B cell (primary cell): ENCODE measurements at regions of chr11 and their contacts with region 1.

Region 1: DNA sequence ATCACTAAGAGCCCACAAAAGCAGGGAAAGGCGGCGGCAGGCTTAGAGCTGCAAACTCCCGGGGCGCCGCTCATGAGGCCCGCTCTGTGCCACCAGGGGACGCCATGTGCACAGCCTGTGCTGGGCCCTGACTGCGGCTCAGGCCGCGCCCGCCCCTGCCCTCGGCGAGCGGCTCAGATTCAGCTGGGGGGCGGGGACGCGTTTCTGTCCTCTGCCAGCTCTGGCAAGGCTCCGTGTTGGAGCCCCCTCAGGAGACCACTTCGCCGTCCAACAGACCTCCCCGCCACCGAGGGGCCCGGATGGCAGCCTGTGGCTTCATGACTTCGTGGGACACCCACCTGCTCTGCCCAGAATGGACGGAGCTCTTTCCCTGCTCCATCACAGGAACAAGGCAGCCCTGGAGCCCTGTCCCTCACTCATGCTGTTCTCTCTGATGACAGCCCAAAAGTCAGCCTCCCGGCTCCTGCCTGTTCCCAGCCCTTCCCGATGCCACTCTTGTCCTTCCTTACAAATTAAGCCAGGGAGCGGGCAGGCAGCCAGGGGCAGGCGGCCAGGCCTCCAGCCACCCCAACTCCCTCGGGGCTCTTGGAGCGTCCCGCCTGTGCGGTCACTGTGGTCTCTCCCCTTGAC is 69.1 kb downstream of the NAT10 start:
- DNase-seq: peak; percentile 84
- ATAC-seq: peak; percentile 100
- H3K4me3 ChIP-seq: peak overlapping the region in 2 of 5 experiments; percentile 12 to 33
- H3K4me3 Mint-ChIP-seq: peak overlapping the region; percentile 49
- H3K27ac ChIP-seq: no peak overlapping the region
- H3K27ac Mint-ChIP-seq: no peak overlapping the region
- H3K4me1 ChIP-seq: peaks cover 0 to 11% of the 10 kb centered on the region in 2 donors
- H3K4me1 Mint-ChIP-seq: peaks cover 5% of the 10 kb centered on the region
- H3K27me3 ChIP-seq: peaks cover 0 to 11% (median 0%) of the 10 kb centered on the region in 4 experiments
- H3K27me3 Mint-ChIP-seq: no peaks in the 10 kb centered on the region
- CTCF ChIP-seq: peak; percentile 89

Region 2: GRCh38 chr11:34134765-34135164 is 39.8 kb before region 1 on chr11:
- CTCF ChIA-PET with region 1: no interaction called
- POLR2A ChIA-PET with region 1: no interaction called
- intact Hi-C with region 1: no loop called
- DNase-seq: no peak
- ATAC-seq: no peak
- H3K4me3 ChIP-seq: no peak overlapping the region
- H3K4me3 Mint-ChIP-seq: no peak overlapping the region
- H3K27ac ChIP-seq: no peak overlapping the region
- H3K27ac Mint-ChIP-seq: no peak overlapping the region
- H3K4me1 ChIP-seq: no peaks in the 10 kb centered on the region
- H3K4me1 Mint-ChIP-seq: no peaks in the 10 kb centered on the region
- H3K27me3 ChIP-seq: no peaks in the 10 kb centered on the region
- H3K27me3 Mint-ChIP-seq: no peaks in the 10 kb centered on the region
- CTCF ChIP-seq: no peak

Region 3: DNA sequence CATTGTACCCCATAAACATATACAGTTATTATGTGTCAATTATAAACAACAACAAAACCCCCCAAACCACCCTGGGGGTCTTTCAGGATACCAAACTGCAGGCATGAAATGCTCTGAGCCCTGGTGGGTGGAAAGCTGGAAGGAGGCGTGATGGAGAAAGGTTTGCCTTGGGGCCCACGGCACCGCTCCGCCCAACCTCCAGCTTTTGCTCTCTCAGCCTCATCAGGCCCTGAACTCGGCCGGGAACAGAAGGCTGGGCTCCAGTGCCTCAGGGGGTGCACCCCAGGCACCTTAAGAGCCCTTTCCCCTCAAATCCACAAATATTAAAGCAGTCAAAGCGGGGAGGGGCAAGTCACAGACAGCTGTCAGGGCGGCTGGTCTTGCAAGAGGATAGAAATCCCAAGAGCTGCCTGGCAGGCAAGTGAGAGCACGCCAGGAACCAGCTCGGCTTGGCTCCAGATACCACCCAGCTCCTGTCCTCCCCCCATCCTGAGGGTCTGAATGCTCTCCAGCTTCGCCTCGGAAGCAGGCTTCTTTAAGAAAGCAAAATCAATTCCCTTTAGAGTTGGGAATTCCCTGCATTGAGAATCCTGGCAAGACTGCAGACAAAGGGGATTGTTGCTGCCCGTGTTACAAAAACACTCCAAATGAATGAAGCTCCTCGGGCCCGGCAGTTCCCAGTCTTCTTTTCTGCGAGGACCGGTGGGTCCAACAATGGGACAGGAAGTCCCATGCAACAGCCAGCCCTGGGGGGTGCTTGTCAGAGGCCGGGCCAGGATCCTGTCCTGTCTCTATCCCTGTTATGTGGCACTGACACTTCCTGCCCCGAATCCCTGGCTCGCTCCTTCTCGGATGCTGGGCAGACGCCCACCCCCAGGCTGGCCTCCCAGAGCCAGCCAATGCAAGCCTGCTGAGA is 11.7 kb after region 1 on chr11:
- CTCF ChIA-PET with region 1: interaction called, 16 read pairs
- POLR2A ChIA-PET with region 1: interaction called, 5 read pairs
- intact Hi-C with region 1: no loop called
- DNase-seq: no peak
- ATAC-seq: no peak
- H3K4me3 ChIP-seq: no peak overlapping the region
- H3K4me3 Mint-ChIP-seq: no peak overlapping the region
- H3K27ac ChIP-seq: no peak overlapping the region
- H3K27ac Mint-ChIP-seq: no peak overlapping the region
- H3K4me1 ChIP-seq: peaks cover 0 to 2% of the 10 kb centered on the region in 2 donors
- H3K4me1 Mint-ChIP-seq: peaks cover 2% of the 10 kb centered on the region
- H3K27me3 ChIP-seq: no peaks in the 10 kb centered on the region
- H3K27me3 Mint-ChIP-seq: no peaks in the 10 kb centered on the region
- CTCF ChIP-seq: no peak

Region 4: DNA sequence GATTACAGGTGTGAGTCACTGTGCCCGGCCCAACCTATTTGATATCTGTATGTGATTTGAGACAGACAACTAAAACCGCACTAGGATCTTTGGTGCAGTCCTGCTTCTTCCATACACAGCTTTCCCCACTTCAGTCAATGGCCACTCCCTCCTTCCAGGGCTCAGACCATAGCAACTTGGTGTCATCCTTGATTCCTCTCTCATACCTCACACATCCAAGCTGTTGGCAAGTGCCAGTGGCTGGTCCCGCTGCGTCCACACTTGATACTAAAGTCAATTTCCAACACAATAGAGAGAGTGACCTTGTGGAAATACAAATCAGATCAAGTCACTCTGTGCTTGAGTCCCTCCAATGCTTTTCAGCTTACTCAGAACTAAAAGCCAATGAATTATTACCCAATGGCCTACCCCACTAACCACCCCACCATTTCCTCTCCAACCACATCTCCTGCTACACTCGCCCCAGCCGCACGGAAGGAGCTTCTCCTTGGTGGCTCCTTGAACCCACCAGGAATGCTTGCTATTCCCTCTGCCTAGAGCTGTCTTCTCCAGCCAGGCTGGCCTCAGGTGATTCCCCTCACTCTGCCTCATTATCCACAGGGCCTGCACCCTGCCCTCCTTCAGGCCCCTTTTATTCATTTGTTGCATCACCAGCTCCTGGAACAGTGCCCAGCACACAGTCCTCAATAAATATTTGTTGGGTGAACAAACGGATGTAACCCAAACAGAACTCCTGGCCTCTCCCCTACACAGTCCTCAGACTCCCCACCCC is 170.4 kb after region 1 on chr11:
- CTCF ChIA-PET with region 1: interaction called, 34 read pairs
- POLR2A ChIA-PET with region 1: no interaction called
- intact Hi-C with region 1: no loop called
- DNase-seq: no peak
- ATAC-seq: no peak
- H3K4me3 ChIP-seq: no peak overlapping the region
- H3K4me3 Mint-ChIP-seq: no peak overlapping the region
- H3K27ac ChIP-seq: no peak overlapping the region
- H3K27ac Mint-ChIP-seq: no peak overlapping the region
- H3K4me1 ChIP-seq: no peaks in the 10 kb centered on the region
- H3K4me1 Mint-ChIP-seq: no peaks in the 10 kb centered on the region
- H3K27me3 ChIP-seq: no peaks in the 10 kb centered on the region
- H3K27me3 Mint-ChIP-seq: no peaks in the 10 kb centered on the region
- CTCF ChIP-seq: no peak

Region 5: DNA sequence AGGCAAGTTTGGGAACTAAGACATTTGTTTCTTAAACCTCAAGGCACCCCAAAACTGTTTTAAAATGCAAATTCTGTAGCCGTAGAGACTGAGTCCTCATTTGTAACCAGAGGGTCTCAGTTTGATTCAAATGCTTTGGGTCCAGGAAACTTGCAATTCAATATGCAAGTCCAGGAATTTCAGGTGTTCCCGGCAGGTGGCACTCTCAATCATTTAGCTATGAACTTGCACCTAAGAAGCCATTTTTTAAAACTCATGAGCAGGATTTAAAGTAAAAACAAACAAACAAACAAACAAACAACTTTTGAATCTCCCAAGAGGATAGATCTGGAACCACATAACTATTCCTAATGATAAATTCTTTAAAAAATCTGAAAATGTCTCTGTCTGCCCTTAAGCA is 192.0 kb after region 1 on chr11:
- CTCF ChIA-PET with region 1: interaction called, 56 read pairs
- POLR2A ChIA-PET with region 1: interaction called, 3 read pairs
- intact Hi-C with region 1: no loop called
- DNase-seq: no peak
- ATAC-seq: no peak
- H3K4me3 ChIP-seq: no peak overlapping the region
- H3K4me3 Mint-ChIP-seq: no peak overlapping the region
- H3K27ac ChIP-seq: no peak overlapping the region
- H3K27ac Mint-ChIP-seq: no peak overlapping the region
- H3K4me1 ChIP-seq: no peaks in the 10 kb centered on the region
- H3K4me1 Mint-ChIP-seq: no peaks in the 10 kb centered on the region
- H3K27me3 ChIP-seq: peaks cover 0 to 6% (median 4%) of the 10 kb centered on the region in 4 experiments
- H3K27me3 Mint-ChIP-seq: peaks cover 38% of the 10 kb centered on the region
- CTCF ChIP-seq: no peak

Region 6: GRCh38 chr11:34394771-34395300 is 220.3 kb after region 1 on chr11:
- CTCF ChIA-PET with region 1: no interaction called
- POLR2A ChIA-PET with region 1: no interaction called
- intact Hi-C with region 1: no loop called
- DNase-seq: no peak
- ATAC-seq: no peak
- H3K4me3 ChIP-seq: no peak overlapping the region
- H3K4me3 Mint-ChIP-seq: no peak overlapping the region
- H3K27ac ChIP-seq: no peak overlapping the region
- H3K27ac Mint-ChIP-seq: no peak overlapping the region
- H3K4me1 ChIP-seq: no peaks in the 10 kb centered on the region
- H3K4me1 Mint-ChIP-seq: no peaks in the 10 kb centered on the region
- H3K27me3 ChIP-seq: peaks cover 0 to 6% (median 4%) of the 10 kb centered on the region in 4 experiments
- H3K27me3 Mint-ChIP-seq: peaks cover 46% of the 10 kb centered on the region
- CTCF ChIP-seq: no peak

Region 7: GRCh38 chr11:34492806-34493414 is 318.4 kb after region 1 on chr11:
- CTCF ChIA-PET with region 1: interaction called, 18 read pairs
- POLR2A ChIA-PET with region 1: no interaction called
- intact Hi-C with region 1: no loop called
- DNase-seq: peak; percentile 64
- ATAC-seq: no peak
- H3K4me3 ChIP-seq: no peak overlapping the region
- H3K4me3 Mint-ChIP-seq: no peak overlapping the region
- H3K27ac ChIP-seq: no peak overlapping the region
- H3K27ac Mint-ChIP-seq: no peak overlapping the region
- H3K4me1 ChIP-seq: no peaks in the 10 kb centered on the region
- H3K4me1 Mint-ChIP-seq: no peaks in the 10 kb centered on the region
- H3K27me3 ChIP-seq: no peaks in the 10 kb centered on the region
- H3K27me3 Mint-ChIP-seq: peaks cover 2% of the 10 kb centered on the region
- CTCF ChIP-seq: peak; percentile 76